H1 (cell line): ENCODE measurements at regions of chr9 and their contacts with region 1.

Region 1: DNA sequence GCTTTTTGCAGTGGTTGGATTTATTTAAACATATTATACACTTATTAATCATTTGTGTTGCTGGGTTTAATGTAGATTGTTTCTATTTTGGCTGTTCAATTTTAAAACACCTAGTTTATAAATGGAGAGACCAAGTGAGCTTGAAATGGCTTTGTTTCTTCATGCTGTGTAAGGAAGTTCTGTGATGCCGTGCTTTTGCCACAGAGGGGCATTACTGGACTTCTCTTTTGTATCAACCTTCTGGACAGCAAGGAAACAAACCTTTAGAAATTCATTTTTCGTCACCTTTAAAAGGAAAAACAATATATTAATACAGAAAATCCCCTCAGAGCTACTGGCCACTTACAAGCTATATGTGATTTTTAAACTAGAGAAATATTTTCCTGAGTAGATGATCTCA is 81.9 kb downstream of the DMRTA1 start:
- DNase-seq: no peak
- H3K4me3 ChIP-seq: no peak overlapping the region
- H3K27ac ChIP-seq: no peak overlapping the region
- H3K4me1 ChIP-seq: no peaks in the 10 kb centered on the region
- H3K27me3 ChIP-seq: no peaks in the 10 kb centered on the region
- CTCF ChIP-seq: peak in 2 of 3 experiments; percentile 33 to 41; a peak in 3 of 4 replicates
- EP300 ChIP-seq: no peak
- POLR2A ChIP-seq: no peak
- RAD21 ChIP-seq: peak; percentile 75 to 77

Region 2: DNA sequence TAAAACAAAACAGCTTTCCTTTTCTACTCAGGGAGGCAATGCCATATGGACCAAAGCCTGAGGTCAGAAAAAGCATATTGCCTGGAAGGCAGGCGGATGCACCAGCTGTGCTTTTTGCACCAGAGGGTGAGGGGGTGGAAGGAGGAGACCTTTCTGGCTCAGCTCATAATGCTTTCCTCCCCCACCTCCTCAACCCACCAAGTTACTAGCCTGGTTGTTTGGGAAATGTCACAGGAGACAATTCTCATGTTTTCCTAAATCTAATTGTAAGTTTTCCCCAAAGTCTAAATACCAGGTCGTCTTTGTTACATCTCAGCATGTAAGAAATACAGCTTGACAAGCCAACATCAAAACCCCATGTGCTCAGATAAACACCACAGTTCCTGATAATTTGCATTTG is 154.4 kb before region 1 on chr9:
- CTCF ChIA-PET with region 1: no interaction called
- POLR2A ChIA-PET with region 1: no interaction called
- DNase-seq: no peak
- H3K4me3 ChIP-seq: no peak overlapping the region
- H3K27ac ChIP-seq: no peak overlapping the region
- H3K4me1 ChIP-seq: no peaks in the 10 kb centered on the region
- H3K27me3 ChIP-seq: no peaks in the 10 kb centered on the region
- CTCF ChIP-seq: no peak
- EP300 ChIP-seq: no peak
- POLR2A ChIP-seq: no peak
- RAD21 ChIP-seq: no peak

Region 3: GRCh38 chr9:22539865-22540264 is 11.4 kb after region 1 on chr9:
- CTCF ChIA-PET with region 1: interaction called, 10 read pairs
- POLR2A ChIA-PET with region 1: no interaction called
- DNase-seq: no peak
- H3K4me3 ChIP-seq: no peak overlapping the region
- H3K27ac ChIP-seq: no peak overlapping the region
- H3K4me1 ChIP-seq: no peaks in the 10 kb centered on the region
- H3K27me3 ChIP-seq: no peaks in the 10 kb centered on the region
- CTCF ChIP-seq: no peak
- EP300 ChIP-seq: no peak
- POLR2A ChIP-seq: no peak
- RAD21 ChIP-seq: no peak

Region 4: GRCh38 chr9:22700171-22700570 is 171.7 kb after region 1 on chr9:
- CTCF ChIA-PET with region 1: no interaction called
- POLR2A ChIA-PET with region 1: no interaction called
- DNase-seq: no peak
- H3K4me3 ChIP-seq: no peak overlapping the region
- H3K27ac ChIP-seq: no peak overlapping the region
- H3K4me1 ChIP-seq: no peaks in the 10 kb centered on the region
- H3K27me3 ChIP-seq: no peaks in the 10 kb centered on the region
- CTCF ChIP-seq: no peak
- EP300 ChIP-seq: no peak
- POLR2A ChIP-seq: no peak
- RAD21 ChIP-seq: no peak